ENCODE measurements at regions of chr3 and their contacts with region 1.

Region 1: DNA sequence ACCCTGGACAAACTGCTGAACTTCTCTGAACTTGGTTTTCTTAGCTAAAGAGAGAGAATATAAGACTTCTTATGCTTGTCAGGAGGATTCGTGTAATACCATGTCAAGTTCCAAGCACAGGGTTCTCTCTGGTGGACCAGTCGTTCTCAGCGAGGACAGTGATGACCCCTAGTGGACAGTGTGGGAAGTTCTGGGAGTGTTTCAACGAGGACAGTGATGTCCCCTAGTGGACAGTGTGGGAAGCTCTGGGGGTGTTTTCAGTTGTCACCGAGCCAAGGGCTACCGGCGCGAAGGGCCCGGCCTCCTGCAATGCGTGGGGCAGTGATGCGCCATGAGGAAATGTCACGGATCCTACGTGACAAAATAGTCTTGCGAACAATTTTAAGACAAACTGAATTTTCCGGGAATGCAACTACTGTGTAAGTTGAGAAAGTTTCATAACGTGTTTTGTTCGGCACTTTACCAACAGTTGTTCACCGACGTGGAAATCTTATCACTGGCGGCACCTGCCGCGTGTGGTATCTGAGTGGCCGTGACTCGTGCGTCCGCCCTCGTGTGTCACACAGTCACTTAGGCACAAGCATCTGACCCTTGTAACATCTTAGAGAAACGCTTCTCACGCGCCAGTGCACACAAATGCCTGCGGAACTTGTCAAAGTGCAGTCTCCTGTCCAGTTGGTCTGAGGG is 39.3 kb upstream of the MUC4 start:
- DNase-seq: peak; percentile 86 to 92
- H3K4me3 ChIP-seq: no peak overlapping the region
- H3K27ac ChIP-seq: no peak overlapping the region
- H3K4me1 ChIP-seq: peaks cover 67% of the 10 kb centered on the region
- H3K27me3 ChIP-seq: no peaks in the 10 kb centered on the region
- CTCF ChIP-seq: peak; percentile 100

Region 2: GRCh38 chr3:195271116-195271858 is 579.7 kb before region 1 on chr3 and contains the start of gene XXYLT1:
- CTCF ChIA-PET with region 1: interaction called, 3 read pairs
- POLR2A ChIA-PET with region 1: no interaction called
- intact Hi-C with region 1: loop called (anchors 1 kb)
- DNase-seq: peak; percentile 70 to 95
- H3K4me3 ChIP-seq: peak within 1 kb of the TSS; percentile 89
- H3K27ac ChIP-seq: no peak within 1 kb of the TSS
- H3K4me1 ChIP-seq: peaks cover 18% of the 10 kb centered on the region
- H3K27me3 ChIP-seq: no peaks in the 10 kb centered on the region
- CTCF ChIP-seq: peak; percentile 99
- total RNA-seq, gene XXYLT1: 13.3 and 14.6 TPM in 2 replicates

Region 3: DNA sequence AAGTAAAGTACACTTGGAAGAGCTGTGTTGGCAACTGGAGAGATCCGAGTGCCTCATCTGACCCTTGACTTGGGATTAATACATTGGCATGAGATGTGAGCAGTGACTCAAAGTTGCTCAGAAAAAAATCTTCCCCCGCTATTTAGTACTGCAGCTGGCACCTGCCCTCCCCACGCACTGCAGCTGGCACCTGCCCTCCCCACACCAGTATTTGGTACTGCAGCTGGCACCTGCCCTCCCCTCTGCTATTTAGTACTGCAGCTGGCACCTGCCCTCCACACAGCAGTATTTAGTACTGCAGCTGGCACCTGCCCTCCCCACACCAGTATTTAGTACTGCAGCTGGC is 134.2 kb before region 1 on chr3:
- CTCF ChIA-PET with region 1: interaction called, 3 read pairs
- POLR2A ChIA-PET with region 1: no interaction called
- intact Hi-C with region 1: loop called (anchors 2 kb)
- DNase-seq: peak; percentile 48 to 94
- H3K4me3 ChIP-seq: 0 out of 2 replicates have a peak overlapping the region, but pooled peaks have one; percentile 0
- H3K27ac ChIP-seq: peak overlapping the region; percentile 93
- H3K4me1 ChIP-seq: peaks cover 72% of the 10 kb centered on the region
- H3K27me3 ChIP-seq: no peaks in the 10 kb centered on the region
- CTCF ChIP-seq: no peak

Region 4: DNA sequence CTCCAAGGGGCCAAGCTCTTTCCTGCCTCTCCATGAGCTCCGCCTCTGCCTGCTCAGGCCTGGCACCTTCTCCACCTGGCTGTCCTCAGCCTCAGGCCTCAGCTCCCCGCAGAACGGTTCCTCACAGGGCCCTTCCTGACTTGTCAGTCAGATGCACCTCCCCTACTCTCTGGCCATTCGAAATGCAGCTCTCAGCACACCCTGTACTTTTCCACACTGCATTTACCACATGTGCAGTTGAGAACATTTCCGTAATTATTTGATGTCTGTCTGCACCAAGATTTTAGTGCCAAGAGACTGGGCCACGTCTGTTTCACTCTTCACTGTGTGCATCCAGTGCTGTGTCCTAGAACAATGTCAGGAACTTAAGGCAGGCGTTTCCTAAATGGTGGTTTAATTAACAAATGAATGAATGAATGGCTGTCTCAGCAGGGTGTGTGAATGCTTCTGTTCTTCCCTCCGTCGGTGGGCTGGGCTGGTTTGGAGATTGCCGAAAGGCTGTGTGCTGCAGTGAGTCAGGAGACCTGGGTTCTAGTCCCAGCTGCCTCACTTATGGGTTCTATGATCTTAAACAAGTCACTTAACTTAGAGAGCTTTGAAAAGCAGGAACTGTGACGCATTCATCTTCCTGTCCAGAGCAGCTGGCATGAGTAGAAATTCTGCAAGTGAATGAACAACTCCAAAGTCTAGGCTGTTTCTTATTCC is 44.6 kb before region 1 on chr3:
- CTCF ChIA-PET with region 1: interaction called, 7 read pairs
- POLR2A ChIA-PET with region 1: interaction called, 4 read pairs
- intact Hi-C with region 1: loop called (anchors 1 kb)
- DNase-seq: no peak
- H3K4me3 ChIP-seq: no peak overlapping the region
- H3K27ac ChIP-seq: no peak overlapping the region
- H3K4me1 ChIP-seq: peaks cover 36% of the 10 kb centered on the region
- H3K27me3 ChIP-seq: no peaks in the 10 kb centered on the region
- CTCF ChIP-seq: no peak

Region 5: GRCh38 chr3:196192036-196192523 is 341.1 kb after region 1 on chr3:
- CTCF ChIA-PET with region 1: no interaction called
- POLR2A ChIA-PET with region 1: no interaction called
- intact Hi-C with region 1: loop called (anchors 10 kb)
- DNase-seq: no peak
- H3K4me3 ChIP-seq: no peak overlapping the region
- H3K27ac ChIP-seq: no peak overlapping the region
- H3K4me1 ChIP-seq: peaks cover 14% of the 10 kb centered on the region
- H3K27me3 ChIP-seq: no peaks in the 10 kb centered on the region
- CTCF ChIP-seq: no peak; the same call in 1 of the 2 replicates

Measured in PC-9 (cell line).